Activated CD8-positive, alpha-beta T cell treated with anti-CD3 and anti-CD28 coated beads, Interleukin-2, amount 10 ng/mL, durations not matched to agents 7 days and 5 days (primary cell): ENCODE measurements at regions of chr3 and their contacts with region 1.

Region 1: GRCh38 chr3:136390574-136390973 is 140.4 kb downstream of the PCCB start:
- DNase-seq: no peak
- ATAC-seq: no peak
- H3K4me3 Mint-ChIP-seq: no peak overlapping the region
- H3K27ac Mint-ChIP-seq: no peak overlapping the region
- H3K4me1 Mint-ChIP-seq: no peaks in the 10 kb centered on the region
- H3K27me3 Mint-ChIP-seq: no peaks in the 10 kb centered on the region

Region 2: DNA sequence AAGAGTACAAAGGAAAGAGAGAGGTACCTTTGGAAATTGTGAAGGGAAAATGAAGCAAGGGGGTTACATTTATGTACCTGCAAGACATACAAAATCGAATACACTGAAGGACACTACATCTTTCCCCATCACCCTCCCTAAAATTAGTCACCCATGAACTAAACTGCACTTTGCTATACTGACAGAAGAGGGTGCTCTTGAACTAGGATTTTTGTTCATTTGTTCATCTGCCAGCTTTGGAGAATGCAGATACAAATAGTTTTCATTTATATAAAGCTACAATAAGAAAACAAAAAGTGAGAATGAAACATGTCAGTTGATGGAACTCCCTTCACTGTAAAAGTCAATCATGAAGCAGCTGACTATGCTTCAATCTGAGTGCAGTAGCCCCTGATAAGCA is 84.7 kb before region 1 on chr3:
- CTCF ChIA-PET with region 1: interaction called, 16 read pairs
- POLR2A ChIA-PET with region 1: no interaction called
- DNase-seq: no peak
- ATAC-seq: no peak
- H3K4me3 Mint-ChIP-seq: no peak overlapping the region
- H3K27ac Mint-ChIP-seq: peak overlapping the region; percentile 57
- H3K4me1 Mint-ChIP-seq: peaks cover 2% of the 10 kb centered on the region
- H3K27me3 Mint-ChIP-seq: no peaks in the 10 kb centered on the region

Region 3: GRCh38 chr3:136624894-136625815 is 234.6 kb after region 1 on chr3:
- CTCF ChIA-PET with region 1: no interaction called
- POLR2A ChIA-PET with region 1: no interaction called
- DNase-seq: no peak
- ATAC-seq: no peak
- H3K4me3 Mint-ChIP-seq: no peak overlapping the region
- H3K27ac Mint-ChIP-seq: no peak overlapping the region
- H3K4me1 Mint-ChIP-seq: no peaks in the 10 kb centered on the region
- H3K27me3 Mint-ChIP-seq: no peaks in the 10 kb centered on the region